ENCODE measurements at regions of chr17 and their contacts with region 1.

Region 1: DNA sequence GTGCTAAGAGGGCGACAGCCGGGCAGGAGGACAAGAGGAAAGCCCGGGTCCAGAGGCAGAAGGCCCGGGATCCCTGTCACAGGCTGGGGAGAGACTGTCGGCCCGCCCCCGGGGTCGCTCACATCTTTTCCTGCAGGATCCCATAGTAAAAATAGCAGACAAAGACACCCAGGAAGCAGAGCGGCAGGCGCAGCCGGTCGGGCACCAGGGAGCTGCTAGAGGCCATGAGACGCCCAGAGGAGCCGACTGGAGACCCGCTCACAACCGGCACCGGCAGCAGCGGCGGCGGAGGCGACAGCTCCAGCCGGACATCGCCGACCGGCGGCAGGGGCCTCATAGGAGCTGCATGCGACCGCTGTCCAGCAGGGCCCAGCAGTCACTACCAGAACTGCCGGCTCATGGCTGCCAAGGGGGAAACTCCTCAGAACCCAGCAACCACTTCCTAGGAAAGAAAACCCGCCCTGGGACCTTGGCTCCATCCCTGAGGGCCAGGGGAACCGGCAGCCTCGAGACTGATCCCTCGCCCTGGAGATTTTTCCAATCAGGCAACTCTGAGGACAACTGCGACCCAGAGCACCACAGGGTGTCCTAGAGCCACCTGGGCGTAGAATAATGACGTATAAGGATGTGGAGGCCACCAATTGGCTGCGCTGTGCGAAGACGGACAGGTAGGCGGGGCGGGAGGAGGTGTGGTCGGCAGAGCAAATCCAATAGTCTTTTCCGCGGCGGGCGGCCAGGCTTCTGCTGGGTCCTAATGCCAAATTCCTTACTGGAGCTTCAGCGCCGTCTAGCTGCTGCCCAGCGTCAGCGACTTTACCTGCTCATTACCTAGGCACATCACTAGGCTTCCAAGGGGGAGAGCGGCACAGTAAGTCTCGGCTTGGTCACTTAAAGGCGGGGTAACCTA is at the start of gene SLC35B1:
- DNase-seq: peak; percentile 99
- ATAC-seq: peak; percentile 93
- H3K4me3 ChIP-seq: peak within 1 kb of the TSS; percentile 76 to 95 (median 83)
- H3K27ac ChIP-seq: peak within 1 kb of the TSS; percentile 93
- H3K4me1 ChIP-seq: peaks cover 54% of the 10 kb centered on the region
- H3K27me3 ChIP-seq: no peaks in the 10 kb centered on the region; a peak in 1 of 5 replicates
- CTCF ChIP-seq: peak; percentile 98
- EP300 ChIP-seq: peak; percentile 13 to 27; a peak in 3 of 4 replicates
- POLR2A ChIP-seq: peak; percentile 58 to 87; a peak in 3 of 4 replicates
- RAD21 ChIP-seq: peak; percentile 69
- total RNA-seq, gene SLC35B1: 67.0 and 113 TPM in 2 replicates

Region 2: DNA sequence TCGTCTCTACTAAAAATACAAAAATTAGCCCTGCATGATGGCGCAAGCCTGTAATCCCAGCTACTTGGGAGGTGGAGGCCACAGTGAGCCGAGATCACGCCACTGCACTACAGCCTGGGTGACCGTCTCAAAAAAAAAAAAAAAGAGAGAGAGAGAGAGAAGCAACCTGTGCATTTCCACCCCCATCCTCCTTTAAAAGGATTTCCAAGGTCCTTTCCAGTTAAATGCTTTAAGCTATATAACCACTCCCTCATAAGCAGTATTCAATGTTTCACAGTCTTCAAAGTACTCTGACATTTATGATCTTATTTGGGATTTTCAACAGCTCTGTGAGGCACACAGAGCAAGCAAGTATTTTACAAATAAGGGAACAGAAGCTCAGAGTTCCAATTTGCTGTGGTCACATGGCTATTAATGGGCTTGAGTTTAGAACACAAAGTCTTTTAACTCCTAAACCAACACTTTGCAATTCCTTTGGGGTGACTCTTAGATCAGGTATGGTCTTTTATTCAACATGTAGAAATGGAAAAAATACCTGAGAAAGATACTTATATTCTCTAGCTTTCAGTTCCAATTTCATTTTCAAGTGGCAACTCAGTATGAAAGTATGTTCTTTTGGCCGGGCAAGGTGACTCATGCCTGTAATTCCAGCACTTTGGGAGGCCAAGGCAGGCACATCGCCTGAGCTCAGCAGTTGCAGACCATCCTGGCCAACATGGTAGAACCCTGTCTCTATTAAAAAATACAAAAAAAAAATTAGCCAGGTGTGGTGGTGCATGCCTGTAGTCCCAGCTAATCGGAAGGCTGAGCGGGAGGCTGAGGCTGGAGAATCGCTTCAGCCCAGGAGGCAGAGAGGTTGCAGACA is 61.2 kb before region 1 on chr17:
- CTCF ChIA-PET with region 1: no interaction called
- POLR2A ChIA-PET with region 1: no interaction called
- in situ Hi-C with region 1: no loop called
- intact Hi-C with region 1: no loop called
- DNase-seq: peak; percentile 23
- ATAC-seq: peak; percentile 48; the same call in 1 of the 3 replicates
- H3K4me3 ChIP-seq: no peak overlapping the region
- H3K27ac ChIP-seq: no peak overlapping the region
- H3K4me1 ChIP-seq: peaks cover 14% of the 10 kb centered on the region; the same call in 1 of the 2 replicates
- H3K27me3 ChIP-seq: no peaks in the 10 kb centered on the region
- CTCF ChIP-seq: no peak
- EP300 ChIP-seq: no peak
- POLR2A ChIP-seq: no peak
- RAD21 ChIP-seq: no peak

Region 3: DNA sequence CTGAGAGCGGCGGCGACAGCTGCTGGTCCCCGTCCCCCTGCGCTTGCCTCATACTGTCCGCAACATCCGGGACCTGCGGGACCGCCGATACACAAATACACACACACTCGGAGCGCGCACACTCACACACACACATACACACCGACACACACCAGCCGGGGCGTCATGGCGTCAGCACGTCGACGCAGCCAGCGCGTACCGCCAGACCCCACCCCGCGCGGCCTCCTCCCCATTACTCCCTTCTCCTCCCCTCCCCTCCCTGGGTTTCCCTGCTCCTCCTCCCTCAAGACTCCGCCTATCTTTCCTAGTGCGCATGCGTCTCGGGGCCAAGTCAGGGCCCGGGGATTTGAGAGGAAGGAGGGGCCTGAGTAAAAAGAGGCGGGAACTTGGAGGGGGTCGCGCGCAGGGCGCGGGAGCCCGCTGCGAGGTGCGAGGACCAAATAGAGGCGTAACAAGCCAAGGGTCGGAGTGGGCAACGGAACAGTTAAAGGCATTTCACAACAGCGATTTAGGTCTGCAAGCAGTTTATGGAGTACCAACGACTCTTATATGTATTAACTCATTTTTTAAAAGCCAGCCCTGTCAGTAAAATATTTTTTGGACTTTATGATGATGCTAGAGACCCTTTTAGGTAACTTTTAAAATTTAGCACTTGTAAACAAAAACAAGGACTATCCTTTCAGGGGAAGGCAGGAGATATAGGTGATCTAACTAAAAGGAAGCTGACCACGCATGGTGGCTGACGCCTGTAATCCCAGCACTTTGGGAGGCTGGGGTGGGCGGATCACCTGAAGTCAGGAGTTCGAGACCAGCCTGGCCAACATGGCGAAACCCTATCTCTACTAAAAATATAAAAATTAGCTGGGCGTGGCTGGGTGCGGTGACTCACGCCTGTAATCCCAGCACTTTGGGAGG is 29.7 kb before region 1 on chr17 and contains the start of gene SPOP:
- CTCF ChIA-PET with region 1: no interaction called
- POLR2A ChIA-PET with region 1: interaction called, 12 read pairs
- in situ Hi-C with region 1: no loop called
- intact Hi-C with region 1: no loop called
- DNase-seq: peak; percentile 98
- ATAC-seq: peak; percentile 88
- H3K4me3 ChIP-seq: peak within 1 kb of the TSS; percentile 68 to 77 (median 74)
- H3K27ac ChIP-seq: peak within 1 kb of the TSS; percentile 73
- H3K4me1 ChIP-seq: peaks cover 49% of the 10 kb centered on the region
- H3K27me3 ChIP-seq: no peaks in the 10 kb centered on the region; a peak in 1 of 5 replicates
- CTCF ChIP-seq: peak; percentile 19; the same call in 1 of the 2 replicates
- EP300 ChIP-seq: no peak
- POLR2A ChIP-seq: peak; percentile 56 to 81
- RAD21 ChIP-seq: 0 out of 2 replicates have a peak, but pooled peaks have one; percentile 19
- total RNA-seq, gene SPOP: 60.8 and 79.4 TPM in 2 replicates

Region 4: GRCh38 chr17:49779739-49780231 is 71.9 kb after region 1 on chr17:
- CTCF ChIA-PET with region 1: no interaction called
- POLR2A ChIA-PET with region 1: no interaction called
- in situ Hi-C with region 1: no loop called
- intact Hi-C with region 1: loop called (anchors 1 kb)
- DNase-seq: peak; percentile 56
- ATAC-seq: peak; percentile 85
- H3K4me3 ChIP-seq: no peak overlapping the region
- H3K27ac ChIP-seq: no peak overlapping the region
- H3K4me1 ChIP-seq: no peaks in the 10 kb centered on the region; the same call in 1 of the 2 replicates
- H3K27me3 ChIP-seq: peaks cover 2 to 14% of the 10 kb centered on the region in 2 experiments; a peak in 3 of 5 replicates
- CTCF ChIP-seq: peak; percentile 81
- EP300 ChIP-seq: no peak
- POLR2A ChIP-seq: no peak
- RAD21 ChIP-seq: 0 out of 2 replicates have a peak, but pooled peaks have one; percentile 30

Region 5: GRCh38 chr17:49851387-49852291 is 143.8 kb after region 1 on chr17:
- CTCF ChIA-PET with region 1: no interaction called
- POLR2A ChIA-PET with region 1: no interaction called
- in situ Hi-C with region 1: no loop called
- intact Hi-C with region 1: loop called (anchors 2 kb)
- DNase-seq: peak; percentile 56
- ATAC-seq: peak; percentile 76
- H3K4me3 ChIP-seq: peak overlapping the region; percentile 56 to 85 (median 69)
- H3K27ac ChIP-seq: no peak overlapping the region
- H3K4me1 ChIP-seq: peaks cover 24% of the 10 kb centered on the region
- H3K27me3 ChIP-seq: peaks cover 4 to 35% of the 10 kb centered on the region in 2 experiments; a peak in 4 of 5 replicates
- CTCF ChIP-seq: peak; percentile 96
- EP300 ChIP-seq: no peak
- POLR2A ChIP-seq: no peak
- RAD21 ChIP-seq: peak; percentile 65

Measured in HepG2 (cell line).